Naive thymus-derived CD8-positive, alpha-beta T cell (primary cell): ENCODE measurements at regions of chr16 and their contacts with region 1.

Region 1: GRCh38 chr16:2867987-2868789 is 10.2 kb upstream of the PRSS22 start:
- DNase-seq: peak; percentile 91 to 96 (median 93)
- ATAC-seq: peak; percentile 94 to 95
- H3K4me3 Mint-ChIP-seq: peak overlapping the region; percentile 82 to 90 (median 86)
- H3K27ac Mint-ChIP-seq: peak overlapping the region; percentile 74 to 93 (median 87)
- H3K4me1 Mint-ChIP-seq: peaks cover 6 to 26% (median 19%) of the 10 kb centered on the region in 4 donors
- H3K27me3 Mint-ChIP-seq: peaks cover 0 to 2% (median 0%) of the 10 kb centered on the region in 5 donors

Region 2: GRCh38 chr16:2838928-2839327 is 29.3 kb before region 1 on chr16:
- POLR2A ChIA-PET with region 1: interaction called, 12 read pairs
- DNase-seq: peak; percentile 48 to 80 (median 56)
- ATAC-seq: peak; percentile 70 to 89
- H3K4me3 Mint-ChIP-seq: peak overlapping the region in 3 of 10 donors; percentile 26 to 53 (median 39)
- H3K27ac Mint-ChIP-seq: peak overlapping the region in 7 of 10 donors; percentile 55 to 77 (median 73)
- H3K4me1 Mint-ChIP-seq: peaks cover 16 to 55% (median 46%) of the 10 kb centered on the region in 4 donors
- H3K27me3 Mint-ChIP-seq: peaks cover 0 to 11% (median 6%) of the 10 kb centered on the region in 5 donors

Region 3: GRCh38 chr16:2883027-2883851 is 15.1 kb after region 1 on chr16 and contains the start of gene FLYWCH2:
- POLR2A ChIA-PET with region 1: interaction called, 17 read pairs
- DNase-seq: peak; percentile 99 to 100 (median 100)
- ATAC-seq: peak; percentile 75 to 78
- H3K4me3 Mint-ChIP-seq: peak within 1 kb of the TSS; percentile 88 to 95 (median 93)
- H3K27ac Mint-ChIP-seq: peak within 1 kb of the TSS; percentile 93 to 99 (median 97)
- H3K4me1 Mint-ChIP-seq: peaks cover 10 to 20% (median 17%) of the 10 kb centered on the region in 4 donors
- H3K27me3 Mint-ChIP-seq: no peaks in the 10 kb centered on the region
- polyA plus RNA-seq, gene FLYWCH2: 18.0 to 28.8 (median 26.5) TPM

Region 4: DNA sequence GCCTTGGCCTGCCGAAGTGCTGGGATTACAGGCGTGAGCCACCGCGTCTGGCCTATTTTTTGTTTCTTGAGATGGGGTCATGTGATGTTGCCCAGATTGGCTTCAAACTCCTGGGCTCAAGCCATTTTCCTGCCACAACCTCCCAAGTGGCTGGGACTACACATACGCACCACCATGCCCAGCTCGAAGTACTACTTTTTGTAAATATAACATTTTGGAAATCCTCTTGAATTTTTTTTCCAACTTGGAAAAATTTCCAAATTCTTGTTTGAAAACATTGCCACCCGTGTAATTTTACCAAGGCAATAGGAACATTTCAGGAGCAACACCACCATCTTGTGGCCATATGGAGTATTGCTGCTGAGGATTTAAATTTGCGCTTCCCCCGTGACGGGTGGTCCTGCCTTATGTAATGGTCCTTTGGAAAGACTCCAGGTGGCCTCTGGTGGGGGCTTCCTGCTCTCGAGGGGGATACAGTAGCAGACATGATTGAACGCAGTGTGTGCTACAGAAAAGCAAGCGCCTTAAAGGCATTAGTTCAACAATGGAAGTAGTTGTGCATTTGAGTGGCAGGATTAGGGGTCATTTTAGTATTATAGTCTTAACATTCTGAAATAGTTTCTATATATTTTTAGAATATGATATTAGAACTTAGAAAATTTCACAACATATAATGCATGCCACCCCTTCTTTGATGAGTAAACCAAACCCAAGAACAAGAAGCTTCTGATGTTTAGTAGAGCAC is 51.5 kb after region 1 on chr16:
- POLR2A ChIA-PET with region 1: no interaction called
- DNase-seq: peak in 9 of 10 donors; percentile 43 to 82 (median 67)
- ATAC-seq: peak; percentile 53 to 73
- H3K4me3 Mint-ChIP-seq: no peak overlapping the region
- H3K27ac Mint-ChIP-seq: peak overlapping the region in 4 of 10 donors; percentile 81 to 93 (median 87)
- H3K4me1 Mint-ChIP-seq: peaks cover 2 to 10% (median 7%) of the 10 kb centered on the region in 4 donors
- H3K27me3 Mint-ChIP-seq: no peaks in the 10 kb centered on the region